WTC11 (cell line): ENCODE measurements at regions of chr11 and their contacts with region 1.

Region 1: DNA sequence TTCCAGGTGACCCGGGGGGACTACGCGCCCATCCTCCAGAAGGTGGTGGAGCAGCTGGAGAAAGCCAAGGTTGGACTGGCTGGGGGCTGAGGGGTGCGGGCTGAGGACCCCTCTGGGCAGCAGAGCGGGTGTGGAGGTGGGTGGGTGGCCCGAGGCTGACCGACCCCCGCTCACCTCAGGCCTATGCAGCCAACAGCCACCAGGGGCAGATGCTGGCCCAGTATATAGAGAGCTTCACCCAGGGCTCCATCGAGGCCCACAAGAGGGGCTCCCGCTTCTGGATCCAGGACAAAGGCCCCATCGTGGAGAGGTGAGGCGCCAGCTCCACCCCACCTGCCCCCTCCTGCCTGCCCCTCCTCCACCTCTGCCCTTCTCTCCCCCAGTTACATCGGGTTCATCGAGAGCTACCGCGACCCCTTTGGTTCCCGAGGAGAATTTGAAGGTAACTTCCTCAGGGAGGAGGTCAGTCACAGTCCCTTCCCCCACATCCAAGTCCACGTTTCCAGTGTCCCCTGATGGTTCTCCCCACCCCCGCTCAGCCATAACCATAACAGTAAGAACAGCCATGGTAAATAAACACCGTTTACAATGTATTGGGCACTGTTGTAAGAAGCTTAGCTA is 11.2 kb downstream of the DPP3 start:
- DNase-seq: peak; percentile 74
- ATAC-seq: peak; percentile 96
- H3K4me3 Mint-ChIP-seq: no peak overlapping the region
- H3K27ac Mint-ChIP-seq: 0 out of 2 replicates have a peak overlapping the region, but pooled peaks have one; percentile 15
- H3K4me1 Mint-ChIP-seq: peaks cover 6% of the 10 kb centered on the region
- H3K27me3 Mint-ChIP-seq: no peaks in the 10 kb centered on the region
- CTCF ChIP-seq: peak; percentile 75

Region 2: GRCh38 chr11:66288671-66289547 is 202.5 kb before region 1 on chr11 and contains the start of gene YIF1A:
- CTCF ChIA-PET with region 1: no interaction called
- POLR2A ChIA-PET with region 1: no interaction called
- DNase-seq: peak; percentile 98
- ATAC-seq: peak; percentile 95
- H3K4me3 Mint-ChIP-seq: peak within 1 kb of the TSS; percentile 96
- H3K27ac Mint-ChIP-seq: peak within 1 kb of the TSS; percentile 96
- H3K4me1 Mint-ChIP-seq: peaks cover 20% of the 10 kb centered on the region
- H3K27me3 Mint-ChIP-seq: peaks cover 37% of the 10 kb centered on the region
- CTCF ChIP-seq: no peak
- total RNA-seq, gene YIF1A: 86.0 to 86.9 TPM (median 86.4 TPM) in 3 replicates

Region 3: GRCh38 chr11:66438504-66439466 is 52.6 kb before region 1 on chr11 and contains the start of gene MRPL11:
- CTCF ChIA-PET with region 1: interaction called, 18 read pairs
- POLR2A ChIA-PET with region 1: no interaction called
- DNase-seq: peak; percentile 95
- ATAC-seq: peak; percentile 98
- H3K4me3 Mint-ChIP-seq: peak within 1 kb of the TSS; percentile 95
- H3K27ac Mint-ChIP-seq: peak within 1 kb of the TSS; percentile 99
- H3K4me1 Mint-ChIP-seq: peaks cover 10% of the 10 kb centered on the region
- H3K27me3 Mint-ChIP-seq: peaks cover 7% of the 10 kb centered on the region
- CTCF ChIP-seq: no peak; the same call in 1 of the 2 replicates
- total RNA-seq, gene MRPL11: 131 to 137 TPM (median 135 TPM) in 3 replicates

Region 4: GRCh38 chr11:66466225-66467027 is 25.0 kb before region 1 on chr11 and contains the start of gene PELI3:
- CTCF ChIA-PET with region 1: interaction called, 16 read pairs
- POLR2A ChIA-PET with region 1: interaction called, 4 read pairs
- DNase-seq: peak; percentile 98
- ATAC-seq: peak; percentile 94
- H3K4me3 Mint-ChIP-seq: peak within 1 kb of the TSS; percentile 88
- H3K27ac Mint-ChIP-seq: peak within 1 kb of the TSS; percentile 90
- H3K4me1 Mint-ChIP-seq: peaks cover 43% of the 10 kb centered on the region
- H3K27me3 Mint-ChIP-seq: no peaks in the 10 kb centered on the region; the same call in 1 of the 2 replicates
- CTCF ChIP-seq: no peak
- total RNA-seq, gene PELI3: 6.7 to 7.8 TPM (median 6.8 TPM) in 3 replicates

Region 5: GRCh38 chr11:66510271-66510989 is 19.0 kb after region 1 on chr11 and contains the start of gene BBS1:
- CTCF ChIA-PET with region 1: interaction called, 17 read pairs
- POLR2A ChIA-PET with region 1: no interaction called
- DNase-seq: peak; percentile 89
- ATAC-seq: peak; percentile 97
- H3K4me3 Mint-ChIP-seq: peak within 1 kb of the TSS; percentile 99
- H3K27ac Mint-ChIP-seq: peak within 1 kb of the TSS; percentile 80
- H3K4me1 Mint-ChIP-seq: peaks cover 7% of the 10 kb centered on the region
- H3K27me3 Mint-ChIP-seq: no peaks in the 10 kb centered on the region
- CTCF ChIP-seq: no peak
- total RNA-seq, gene BBS1: 22.9 to 26.8 TPM (median 24.1 TPM) in 3 replicates

Region 6: DNA sequence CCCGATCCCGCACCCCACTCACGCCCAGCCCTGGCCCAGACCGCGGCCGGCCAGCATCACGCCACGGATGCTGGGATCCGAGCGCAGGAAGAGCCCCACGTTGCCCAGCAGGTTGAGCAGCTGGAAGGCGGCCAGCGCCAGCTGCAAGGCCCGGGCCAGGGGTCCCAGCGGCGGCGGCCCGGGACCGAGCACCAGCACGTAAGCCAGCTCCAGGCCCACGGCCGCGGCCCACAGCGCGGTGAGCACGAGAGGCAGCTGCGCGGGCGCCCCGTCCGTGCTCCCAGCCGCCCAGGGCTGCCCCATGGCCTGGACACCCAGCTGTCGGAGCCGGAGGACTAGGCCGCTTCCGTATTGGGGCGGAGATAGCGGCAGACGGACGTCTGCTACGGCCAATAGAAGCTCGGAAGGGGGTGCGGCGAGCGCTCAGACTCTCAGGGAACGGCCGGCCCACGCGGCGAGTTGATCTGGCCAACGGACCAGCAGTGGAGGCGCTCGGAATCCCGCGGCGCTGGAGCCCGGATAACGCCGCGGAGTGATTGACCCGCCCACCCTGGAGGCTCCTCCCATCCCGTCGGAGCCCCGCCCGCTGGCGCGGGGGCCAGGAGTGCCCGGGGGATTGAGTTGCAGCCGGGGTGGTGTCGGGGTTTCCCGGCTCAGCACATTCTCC is 54.4 kb after region 1 on chr11 and contains the start of gene ZDHHC24:
- CTCF ChIA-PET with region 1: interaction called, 18 read pairs
- POLR2A ChIA-PET with region 1: no interaction called
- DNase-seq: peak; percentile 98
- ATAC-seq: peak; percentile 85
- H3K4me3 Mint-ChIP-seq: peak within 1 kb of the TSS; percentile 85
- H3K27ac Mint-ChIP-seq: peak within 1 kb of the TSS; percentile 93
- H3K4me1 Mint-ChIP-seq: peaks cover 38% of the 10 kb centered on the region
- H3K27me3 Mint-ChIP-seq: no peaks in the 10 kb centered on the region
- CTCF ChIP-seq: no peak
- total RNA-seq, gene ZDHHC24: 11.1 to 14.8 TPM (median 13.7 TPM) in 3 replicates

Region 7: DNA sequence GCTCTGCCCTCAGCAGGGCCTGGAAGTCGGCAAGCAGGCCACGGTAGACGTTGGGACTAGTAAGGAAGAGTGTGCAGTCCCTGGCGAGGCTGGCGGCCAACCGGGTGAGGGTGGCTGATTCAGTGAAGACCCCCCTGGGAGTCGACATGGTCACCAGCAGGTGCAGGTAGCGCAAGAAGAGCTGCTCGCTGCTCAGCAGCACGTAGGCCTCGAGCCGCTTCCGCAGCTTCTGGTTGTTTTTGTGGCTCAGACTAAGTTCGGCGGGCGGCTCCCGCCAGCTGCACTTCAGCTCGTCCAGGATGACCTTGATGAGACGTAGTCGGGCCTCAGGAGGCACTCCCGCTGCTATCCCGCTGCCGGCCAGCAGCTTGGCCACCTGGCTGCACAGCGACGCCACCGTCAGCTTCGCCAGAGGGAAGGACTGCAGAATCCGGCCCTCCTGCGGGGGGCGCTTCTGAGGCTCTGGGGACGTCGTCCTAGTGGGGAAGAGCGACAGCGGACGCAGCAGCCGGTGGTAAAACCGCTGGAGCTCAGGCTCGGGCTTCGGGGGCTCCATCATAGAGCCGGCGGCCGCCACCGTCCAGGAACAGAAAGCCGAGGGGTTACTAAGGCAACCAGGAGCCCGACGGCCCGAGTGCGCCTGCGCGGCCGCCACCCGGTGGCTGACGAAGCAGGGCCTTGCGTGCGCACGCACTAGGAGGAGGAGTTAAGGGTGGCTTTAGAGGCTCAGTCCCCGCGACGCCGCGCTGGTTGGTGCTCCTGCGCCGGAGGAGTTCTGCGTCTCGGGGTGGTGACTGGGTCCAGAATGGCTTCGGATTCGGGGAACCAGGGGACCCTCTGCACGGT is 101.3 kb after region 1 on chr11 and contains the starts of genes CCDC87 and CCS:
- CTCF ChIA-PET with region 1: interaction called, 13 read pairs
- POLR2A ChIA-PET with region 1: no interaction called
- DNase-seq: peak; percentile 97
- ATAC-seq: peak; percentile 94
- H3K4me3 Mint-ChIP-seq: peak within 1 kb of the TSS; percentile 97
- H3K27ac Mint-ChIP-seq: peak within 1 kb of the TSS; percentile 99
- H3K4me1 Mint-ChIP-seq: peaks cover 11% of the 10 kb centered on the region
- H3K27me3 Mint-ChIP-seq: peaks cover 39% of the 10 kb centered on the region
- CTCF ChIP-seq: peak; percentile 32
- total RNA-seq, gene CCDC87: 0.71 to 0.85 TPM (median 0.80 TPM) in 3 replicates
- total RNA-seq, gene CCS: 35.9 to 47.3 TPM (median 41.7 TPM) in 3 replicates

Region 8: DNA sequence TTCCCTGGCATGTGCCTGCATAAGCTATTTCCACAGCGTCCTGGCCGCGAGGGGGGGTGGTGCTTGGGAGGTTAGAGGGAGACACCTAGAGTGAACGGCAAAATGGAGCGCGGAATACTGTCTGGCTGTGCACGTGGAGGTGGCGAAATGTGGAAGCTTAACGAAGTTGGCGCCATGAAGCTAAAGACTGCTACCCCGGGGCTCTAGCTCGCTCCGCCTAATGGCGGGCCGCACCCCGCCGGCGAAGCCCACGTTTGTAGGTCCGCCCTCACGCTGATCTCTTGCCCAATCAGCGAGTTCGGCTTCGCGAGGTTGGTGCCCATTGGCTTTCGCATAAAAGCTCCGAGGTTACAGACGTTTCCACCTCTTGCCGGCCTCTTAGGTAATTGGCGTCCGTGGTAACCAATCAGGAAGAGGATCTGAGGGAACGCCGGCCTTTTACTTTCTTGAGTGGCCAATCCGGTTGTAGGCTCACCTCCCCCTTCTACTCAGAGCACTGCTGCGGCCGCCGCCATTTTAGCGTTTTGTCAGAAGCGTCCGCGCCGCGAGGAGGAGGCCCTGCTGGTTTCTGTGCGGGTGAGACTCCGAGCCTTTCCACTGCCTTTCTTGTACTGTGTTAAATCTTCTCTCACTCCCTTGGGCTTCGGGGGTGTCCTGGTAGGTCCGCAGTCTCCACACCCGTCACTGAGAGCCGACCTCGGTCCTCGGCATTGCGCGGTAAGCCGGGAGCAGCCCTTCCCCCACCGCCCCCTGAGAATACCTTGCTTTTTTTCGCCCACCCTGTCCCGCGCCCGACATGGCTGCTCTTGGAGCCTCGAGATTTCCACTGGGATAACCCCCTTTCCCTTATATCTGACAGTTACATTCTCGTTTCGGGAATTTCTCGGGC is 147.0 kb after region 1 on chr11 and contains the start of gene RBM4:
- CTCF ChIA-PET with region 1: interaction called, 12 read pairs
- POLR2A ChIA-PET with region 1: interaction called, 5 read pairs
- DNase-seq: peak; percentile 97
- ATAC-seq: peak; percentile 96
- H3K4me3 Mint-ChIP-seq: peak within 1 kb of the TSS; percentile 99
- H3K27ac Mint-ChIP-seq: peak within 1 kb of the TSS; percentile 99
- H3K4me1 Mint-ChIP-seq: peaks cover 60% of the 10 kb centered on the region
- H3K27me3 Mint-ChIP-seq: no peaks in the 10 kb centered on the region
- CTCF ChIP-seq: no peak
- total RNA-seq, gene RBM4: 144 to 163 TPM (median 154 TPM) in 3 replicates